HEK293 (cell line): ENCODE measurements at regions of chr19 and their contacts with region 1.

Region 1: GRCh38 chr19:8050274-8051096 is 2.1 kb upstream of the CCL25 start:
- H3K4me3 ChIP-seq: peak overlapping the region; percentile 16
- H3K27ac ChIP-seq: no peak overlapping the region
- H3K4me1 ChIP-seq: no peaks in the 10 kb centered on the region
- CTCF ChIP-seq: no peak

Region 2: GRCh38 chr19:8017808-8018207 is 32.7 kb before region 1 on chr19:
- CTCF ChIA-PET with region 1: no interaction called
- POLR2A ChIA-PET with region 1: interaction called, 10 read pairs
- H3K4me3 ChIP-seq: no peak overlapping the region
- H3K27ac ChIP-seq: no peak overlapping the region
- H3K4me1 ChIP-seq: no peaks in the 10 kb centered on the region
- CTCF ChIP-seq: no peak

Region 3: GRCh38 chr19:8262431-8262830 is 211.9 kb after region 1 on chr19:
- CTCF ChIA-PET with region 1: no interaction called
- POLR2A ChIA-PET with region 1: no interaction called
- H3K4me3 ChIP-seq: no peak overlapping the region
- H3K27ac ChIP-seq: no peak overlapping the region
- H3K4me1 ChIP-seq: no peaks in the 10 kb centered on the region
- CTCF ChIP-seq: no peak